CD8-positive, alpha-beta T cell (primary cell): ENCODE measurements at regions of chr12 and their contacts with region 1.

Region 1: DNA sequence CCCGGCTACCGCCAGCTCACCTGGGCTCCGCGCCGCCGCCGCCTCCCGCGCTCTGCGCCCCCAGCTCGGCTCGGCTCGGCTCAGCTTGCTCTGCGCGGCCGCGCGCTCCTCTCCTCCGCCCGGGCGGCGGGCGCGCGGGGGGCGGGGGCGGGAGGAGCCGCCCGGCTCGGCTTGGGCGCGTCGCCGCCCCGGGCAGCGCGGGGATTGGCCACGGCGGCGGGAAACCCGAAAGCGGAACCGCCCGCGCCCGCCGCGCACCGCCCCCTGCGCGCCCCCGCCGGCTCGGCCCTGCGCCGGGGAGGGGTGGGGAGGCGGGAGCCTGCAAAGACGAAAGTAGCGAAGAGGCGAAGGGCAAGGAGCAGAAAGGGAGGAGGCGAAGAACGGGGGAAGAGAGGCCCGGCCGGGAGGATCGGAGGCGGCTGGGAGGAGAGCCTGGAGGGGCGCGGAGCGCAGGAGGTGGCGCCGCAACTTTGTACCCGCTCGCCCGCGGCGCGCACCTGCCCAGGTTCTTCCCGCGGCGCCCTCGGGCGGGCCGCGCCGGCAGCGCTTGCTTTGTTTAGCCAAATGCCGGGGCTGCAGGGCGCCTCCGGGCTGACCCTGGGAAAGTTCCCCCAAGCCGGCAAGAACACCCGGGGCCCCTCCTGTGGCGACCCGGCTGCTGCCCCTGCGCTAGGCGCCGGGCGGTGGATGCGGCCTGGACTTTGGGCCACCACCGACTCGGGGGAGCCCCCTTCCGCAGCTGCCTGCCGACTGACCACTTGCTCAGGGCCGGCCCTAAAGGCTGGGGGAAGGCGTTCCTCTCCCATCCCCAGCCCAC is at the start of gene CAMKK2:
- DNase-seq: peak; percentile 77 to 94 (median 85)
- ATAC-seq: peak; percentile 88
- H3K4me3 ChIP-seq: peak within 1 kb of the TSS; percentile 73 to 93
- H3K4me3 Mint-ChIP-seq: peak within 1 kb of the TSS; percentile 87
- H3K27ac ChIP-seq: peak within 1 kb of the TSS; percentile 31 to 59
- H3K27ac Mint-ChIP-seq: peak within 1 kb of the TSS; percentile 80
- H3K4me1 ChIP-seq: peaks cover 15% of the 10 kb centered on the region
- H3K4me1 Mint-ChIP-seq: peaks cover 20% of the 10 kb centered on the region
- H3K27me3 ChIP-seq: no peaks in the 10 kb centered on the region
- H3K27me3 Mint-ChIP-seq: no peaks in the 10 kb centered on the region
- CTCF ChIP-seq: no peak
- total RNA-seq, gene CAMKK2: 3.6 to 4.1 TPM

Region 2: DNA sequence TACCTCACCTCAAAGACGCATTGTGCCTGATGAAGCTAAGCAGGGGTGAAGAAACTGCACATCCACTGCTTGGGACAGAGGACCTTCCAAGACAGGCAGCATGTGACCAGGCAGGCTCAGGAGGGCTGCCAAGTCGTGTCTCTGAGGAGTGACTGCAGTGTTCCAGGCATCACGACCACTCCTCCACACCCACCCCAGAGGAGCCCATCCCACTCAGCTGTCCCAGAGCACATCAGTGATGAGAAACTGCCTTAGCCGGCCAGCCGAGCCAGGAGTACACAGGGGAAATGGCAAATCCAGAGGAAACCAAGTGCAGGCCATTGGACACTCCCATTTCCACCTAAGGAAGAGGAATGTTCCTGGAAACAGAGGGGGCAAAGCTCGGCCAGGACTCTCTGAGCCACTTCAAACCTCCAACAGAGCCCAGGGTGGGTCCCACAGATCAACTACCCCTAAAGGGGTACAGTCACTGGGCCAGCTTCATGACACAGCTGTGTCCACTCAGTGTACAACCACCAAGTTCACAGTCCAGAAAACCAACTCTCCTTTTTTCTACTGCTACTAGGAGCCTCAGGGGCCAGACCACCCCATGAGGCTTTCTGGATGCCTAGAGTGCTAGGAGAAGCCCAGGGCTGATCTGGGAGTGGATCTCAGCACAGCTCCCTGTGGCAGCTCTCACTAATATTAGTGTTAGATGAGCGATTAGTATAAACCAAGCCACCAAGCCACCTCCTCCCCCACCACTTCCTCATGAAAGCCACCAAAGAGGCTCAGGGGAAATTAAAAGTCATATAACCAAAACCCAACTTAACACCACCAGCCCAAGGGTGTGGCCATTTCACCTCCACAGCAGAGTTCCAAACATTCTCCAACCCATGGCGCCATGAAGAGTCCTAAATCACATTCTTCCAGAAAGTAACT is 1046.7 kb before region 1 on chr12:
- CTCF ChIA-PET with region 1: no interaction called
- POLR2A ChIA-PET with region 1: no interaction called
- intact Hi-C with region 1: loop called in 1 of 2 experiments (anchors 5 kb)
- DNase-seq: peak in 6 of 9 experiments; percentile 25 to 80 (median 54)
- ATAC-seq: no peak
- H3K4me3 ChIP-seq: peak overlapping the region; percentile 33 to 37
- H3K4me3 Mint-ChIP-seq: peak overlapping the region; percentile 71
- H3K27ac ChIP-seq: peak overlapping the region; percentile 28 to 77
- H3K27ac Mint-ChIP-seq: peak overlapping the region; percentile 85
- H3K4me1 ChIP-seq: peaks cover 83% of the 10 kb centered on the region
- H3K4me1 Mint-ChIP-seq: peaks cover 76% of the 10 kb centered on the region
- H3K27me3 ChIP-seq: no peaks in the 10 kb centered on the region
- H3K27me3 Mint-ChIP-seq: no peaks in the 10 kb centered on the region
- CTCF ChIP-seq: no peak

Region 3: GRCh38 chr12:121209624-121210572 is 86.9 kb before region 1 on chr12 and contains the start of gene P2RX4:
- CTCF ChIA-PET with region 1: no interaction called
- POLR2A ChIA-PET with region 1: no interaction called
- intact Hi-C with region 1: loop called (anchors 1 to 2 kb)
- DNase-seq: peak; percentile 72 to 96 (median 88)
- ATAC-seq: peak; percentile 86
- H3K4me3 ChIP-seq: peak within 1 kb of the TSS; percentile 60 to 66
- H3K4me3 Mint-ChIP-seq: peak within 1 kb of the TSS; percentile 78
- H3K27ac ChIP-seq: peak within 1 kb of the TSS; percentile 85 to 86
- H3K27ac Mint-ChIP-seq: peak within 1 kb of the TSS; percentile 92
- H3K4me1 ChIP-seq: peaks cover 16% of the 10 kb centered on the region
- H3K4me1 Mint-ChIP-seq: peaks cover 24% of the 10 kb centered on the region
- H3K27me3 ChIP-seq: no peaks in the 10 kb centered on the region
- H3K27me3 Mint-ChIP-seq: no peaks in the 10 kb centered on the region
- CTCF ChIP-seq: no peak
- total RNA-seq, gene P2RX4: 27.5 to 29.8 TPM

Region 4: DNA sequence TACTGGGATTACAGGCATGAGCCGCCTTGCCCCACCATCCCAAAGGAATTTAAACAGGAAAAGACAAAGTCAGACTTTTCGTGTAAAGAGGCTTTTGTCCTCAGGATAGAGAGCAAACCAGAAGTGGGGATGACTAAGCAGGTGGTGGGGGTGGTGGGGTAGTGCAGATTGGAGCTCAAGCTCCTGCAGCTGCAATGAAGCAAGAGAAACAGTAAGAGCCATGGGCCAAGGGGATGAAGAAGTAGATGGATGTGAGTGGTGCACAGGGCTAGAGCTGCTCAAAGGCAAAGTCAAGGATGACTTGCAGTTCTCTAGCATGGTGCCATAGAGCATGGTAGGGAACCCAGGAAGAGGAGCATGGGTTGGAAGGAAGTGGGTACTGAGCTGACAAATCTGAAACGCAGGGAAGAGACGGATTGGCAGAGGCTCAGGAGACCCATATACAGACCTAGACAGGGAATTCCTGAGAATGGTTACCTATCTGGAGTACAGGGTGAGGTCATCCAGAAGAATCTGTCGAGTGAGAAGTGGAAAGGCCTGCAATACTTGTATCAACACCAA is 91.7 kb after region 1 on chr12:
- CTCF ChIA-PET with region 1: no interaction called
- POLR2A ChIA-PET with region 1: no interaction called
- intact Hi-C with region 1: no loop called
- DNase-seq: no peak
- ATAC-seq: no peak
- H3K4me3 ChIP-seq: no peak overlapping the region
- H3K4me3 Mint-ChIP-seq: no peak overlapping the region
- H3K27ac ChIP-seq: no peak overlapping the region
- H3K27ac Mint-ChIP-seq: no peak overlapping the region
- H3K4me1 ChIP-seq: no peaks in the 10 kb centered on the region
- H3K4me1 Mint-ChIP-seq: peaks cover 7% of the 10 kb centered on the region
- H3K27me3 ChIP-seq: no peaks in the 10 kb centered on the region
- H3K27me3 Mint-ChIP-seq: no peaks in the 10 kb centered on the region
- CTCF ChIP-seq: no peak

Region 5: DNA sequence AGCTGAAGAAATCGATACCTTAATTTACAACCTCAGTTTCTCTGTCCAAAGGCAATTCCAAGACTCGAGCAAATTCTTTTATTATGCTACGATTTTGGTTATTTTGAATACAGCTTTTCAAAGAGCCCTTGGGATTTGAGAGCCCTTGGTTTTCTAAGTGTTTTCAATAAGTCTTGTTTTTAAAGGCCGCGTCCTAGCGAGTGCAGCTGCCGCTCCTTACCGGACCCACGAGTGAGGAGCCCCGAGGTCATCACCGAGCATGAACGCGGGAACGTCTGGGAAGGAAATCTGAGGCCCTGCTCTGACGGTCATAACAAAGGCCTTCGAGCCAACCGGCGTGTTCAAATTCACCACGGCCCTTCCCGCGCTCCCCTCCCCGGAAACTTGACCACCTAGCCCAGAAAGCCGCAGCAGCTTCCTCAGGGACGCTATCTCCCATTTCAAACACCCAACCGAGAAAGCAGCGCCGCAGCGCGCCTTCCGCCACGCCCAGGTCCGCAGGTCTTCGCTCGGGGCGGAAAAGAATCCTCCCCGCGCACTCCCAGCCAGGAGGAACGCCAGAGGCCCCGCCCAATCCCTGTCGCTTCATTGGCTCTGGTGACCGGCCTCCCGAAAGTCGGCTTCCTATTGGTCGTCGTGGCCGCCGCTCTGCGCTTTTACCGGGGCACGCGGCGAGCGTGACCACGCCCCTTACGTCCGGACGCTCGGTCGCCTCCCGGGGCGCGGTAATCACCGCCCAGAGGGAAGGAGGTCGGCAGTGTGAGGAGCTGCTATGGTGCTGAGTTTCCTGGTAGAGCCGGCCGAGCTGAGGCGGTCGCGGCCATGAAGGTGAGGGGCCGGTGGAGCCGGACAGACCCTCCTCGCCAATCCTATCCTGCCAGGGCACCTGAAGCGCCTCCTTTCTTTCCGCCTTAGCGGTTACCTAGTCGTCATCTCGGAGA is 102.8 kb after region 1 on chr12 and contains the start of gene RNF34:
- CTCF ChIA-PET with region 1: no interaction called
- POLR2A ChIA-PET with region 1: interaction called, 3 read pairs
- intact Hi-C with region 1: loop called in 1 of 2 experiments (anchors 1 kb)
- DNase-seq: peak; percentile 95 to 99 (median 97)
- ATAC-seq: peak; percentile 87
- H3K4me3 ChIP-seq: peak within 1 kb of the TSS; percentile 78 to 89
- H3K4me3 Mint-ChIP-seq: peak within 1 kb of the TSS; percentile 86
- H3K27ac ChIP-seq: peak within 1 kb of the TSS; percentile 78 to 90
- H3K27ac Mint-ChIP-seq: peak within 1 kb of the TSS; percentile 97
- H3K4me1 ChIP-seq: peaks cover 28% of the 10 kb centered on the region
- H3K4me1 Mint-ChIP-seq: peaks cover 33% of the 10 kb centered on the region
- H3K27me3 ChIP-seq: no peaks in the 10 kb centered on the region
- H3K27me3 Mint-ChIP-seq: no peaks in the 10 kb centered on the region
- CTCF ChIP-seq: no peak
- total RNA-seq, gene RNF34: 46.8 to 51.3 TPM

Region 6: GRCh38 chr12:121467115-121467793 is 170.4 kb after region 1 on chr12:
- CTCF ChIA-PET with region 1: no interaction called
- POLR2A ChIA-PET with region 1: no interaction called
- intact Hi-C with region 1: loop called in 1 of 2 experiments (anchors 2 kb)
- DNase-seq: peak; percentile 77 to 94 (median 86)
- ATAC-seq: peak; percentile 85
- H3K4me3 ChIP-seq: peak overlapping the region; percentile 49 to 55
- H3K4me3 Mint-ChIP-seq: peak overlapping the region; percentile 68
- H3K27ac ChIP-seq: peak overlapping the region; percentile 44 to 59
- H3K27ac Mint-ChIP-seq: no peak overlapping the region
- H3K4me1 ChIP-seq: peaks cover 26% of the 10 kb centered on the region
- H3K4me1 Mint-ChIP-seq: peaks cover 37% of the 10 kb centered on the region
- H3K27me3 ChIP-seq: no peaks in the 10 kb centered on the region
- H3K27me3 Mint-ChIP-seq: no peaks in the 10 kb centered on the region
- CTCF ChIP-seq: no peak

Region 7: DNA sequence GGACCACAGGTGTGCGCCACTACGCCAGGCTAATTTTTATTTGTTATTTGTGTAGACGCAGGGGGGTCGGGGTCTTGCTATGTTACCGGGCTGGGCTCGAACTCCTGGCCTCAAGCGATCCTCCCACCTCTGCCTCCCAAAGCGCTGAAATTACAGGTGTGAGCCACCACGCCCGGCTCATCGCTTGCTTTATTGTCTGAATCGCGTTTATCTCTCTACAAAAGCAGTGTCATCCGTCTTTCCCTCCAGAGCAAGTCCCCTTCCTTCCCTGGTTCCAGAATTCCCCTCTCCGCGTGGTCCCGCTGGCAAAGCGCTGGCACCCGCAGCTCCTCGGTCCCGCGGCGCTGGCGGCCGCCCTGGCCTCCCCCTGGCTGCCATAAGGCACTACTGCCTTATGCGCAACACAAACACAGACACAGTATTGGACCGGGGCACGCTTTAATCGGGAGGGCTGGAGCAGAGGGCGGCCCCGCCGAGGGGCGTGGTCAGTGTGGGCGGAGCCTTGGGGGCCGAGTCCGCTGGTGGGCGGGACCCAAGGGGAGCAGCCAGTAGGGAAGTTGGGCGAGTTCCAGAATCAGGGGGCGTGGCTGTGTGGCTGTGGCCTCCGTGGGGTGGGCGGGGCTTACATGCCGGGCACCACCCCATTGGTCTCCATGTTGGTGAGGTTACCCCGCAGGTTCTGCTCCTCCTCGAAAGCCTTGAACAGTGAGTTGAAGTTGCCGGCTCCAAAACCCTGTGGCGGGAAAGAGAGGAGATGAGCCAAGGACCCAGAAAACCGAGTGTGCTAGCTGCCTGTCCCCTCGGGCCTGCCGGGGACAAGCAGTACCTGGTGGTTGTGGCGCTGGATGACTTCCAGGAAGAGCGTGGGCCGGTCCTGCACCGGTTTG is 542.5 kb after region 1 on chr12:
- CTCF ChIA-PET with region 1: no interaction called
- POLR2A ChIA-PET with region 1: no interaction called
- intact Hi-C with region 1: loop called in 1 of 2 experiments (anchors 5 kb)
- DNase-seq: peak; percentile 99 to 100 (median 100)
- ATAC-seq: peak; percentile 97
- H3K4me3 ChIP-seq: peak overlapping the region; percentile 73 to 95
- H3K4me3 Mint-ChIP-seq: peak overlapping the region; percentile 97
- H3K27ac ChIP-seq: peak overlapping the region; percentile 34 to 54
- H3K27ac Mint-ChIP-seq: peak overlapping the region; percentile 88
- H3K4me1 ChIP-seq: peaks cover 7% of the 10 kb centered on the region
- H3K4me1 Mint-ChIP-seq: peaks cover 13% of the 10 kb centered on the region
- H3K27me3 ChIP-seq: no peaks in the 10 kb centered on the region
- H3K27me3 Mint-ChIP-seq: no peaks in the 10 kb centered on the region
- CTCF ChIP-seq: peak; percentile 27